ENCODE measurements at regions of chr5 and their contacts with region 1.

Region 1: GRCh38 chr5:15003511-15003920 is 131.9 kb upstream of the ANKH start:
- DNase-seq: peak; percentile 30
- H3K4me3 Mint-ChIP-seq: no peak overlapping the region
- H3K27ac Mint-ChIP-seq: no peak overlapping the region
- H3K4me1 Mint-ChIP-seq: peaks cover 18% of the 10 kb centered on the region
- H3K27me3 Mint-ChIP-seq: peaks cover 35% of the 10 kb centered on the region

Region 2: GRCh38 chr5:14351845-14352712 is 651.4 kb before region 1 on chr5:
- intact Hi-C with region 1: loop called (anchors 1 kb)
- DNase-seq: peak; percentile 33
- H3K4me3 Mint-ChIP-seq: no peak overlapping the region
- H3K27ac Mint-ChIP-seq: no peak overlapping the region
- H3K4me1 Mint-ChIP-seq: no peaks in the 10 kb centered on the region
- H3K27me3 Mint-ChIP-seq: peaks cover 6% of the 10 kb centered on the region

Region 3: GRCh38 chr5:14706615-14707021 is 296.9 kb before region 1 on chr5:
- intact Hi-C with region 1: loop called (anchors 5 kb)
- DNase-seq: peak; percentile 46
- H3K4me3 Mint-ChIP-seq: peak overlapping the region; percentile 79
- H3K27ac Mint-ChIP-seq: peak overlapping the region; percentile 99
- H3K4me1 Mint-ChIP-seq: peaks cover 76% of the 10 kb centered on the region
- H3K27me3 Mint-ChIP-seq: no peaks in the 10 kb centered on the region

Region 4: DNA sequence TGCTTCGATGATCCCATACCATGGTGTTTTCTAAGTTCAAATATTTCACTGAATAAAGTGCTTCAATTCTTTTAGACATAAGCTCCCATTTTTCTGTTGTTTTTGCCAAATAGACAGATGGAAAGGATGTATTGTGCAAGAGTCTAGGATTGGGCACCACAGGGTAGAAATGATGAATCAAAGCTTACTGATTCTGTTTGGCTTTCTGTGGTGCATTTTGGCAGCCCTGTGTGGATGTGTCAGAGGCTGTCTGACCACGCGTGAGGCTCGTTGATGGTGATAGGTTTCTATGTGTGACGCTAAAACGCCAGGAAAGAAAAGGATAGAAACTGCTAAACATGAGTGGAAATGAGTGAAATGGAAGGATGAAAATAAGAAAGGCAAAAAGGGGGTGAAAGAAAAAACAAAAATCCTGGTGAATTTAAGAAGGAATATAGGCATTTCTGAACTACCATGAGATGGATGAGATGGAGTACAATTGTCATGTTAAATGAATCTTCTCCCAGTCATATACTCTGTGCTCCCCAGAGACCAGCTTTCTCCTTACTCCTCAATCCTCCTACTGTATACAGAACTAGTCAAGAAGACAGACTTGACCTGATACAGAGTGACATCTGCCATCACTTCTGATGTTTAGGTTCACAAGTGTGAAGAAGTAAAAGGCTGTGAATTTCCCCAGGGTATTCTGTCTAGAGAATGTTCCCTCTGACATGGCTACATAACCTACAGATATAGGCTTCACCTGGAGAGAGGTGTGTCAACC is 186.3 kb before region 1 on chr5:
- intact Hi-C with region 1: loop called (anchors 5 kb)
- DNase-seq: no peak
- H3K4me3 Mint-ChIP-seq: no peak overlapping the region
- H3K27ac Mint-ChIP-seq: peak overlapping the region; percentile 43
- H3K4me1 Mint-ChIP-seq: peaks cover 43% of the 10 kb centered on the region
- H3K27me3 Mint-ChIP-seq: no peaks in the 10 kb centered on the region

Region 5: DNA sequence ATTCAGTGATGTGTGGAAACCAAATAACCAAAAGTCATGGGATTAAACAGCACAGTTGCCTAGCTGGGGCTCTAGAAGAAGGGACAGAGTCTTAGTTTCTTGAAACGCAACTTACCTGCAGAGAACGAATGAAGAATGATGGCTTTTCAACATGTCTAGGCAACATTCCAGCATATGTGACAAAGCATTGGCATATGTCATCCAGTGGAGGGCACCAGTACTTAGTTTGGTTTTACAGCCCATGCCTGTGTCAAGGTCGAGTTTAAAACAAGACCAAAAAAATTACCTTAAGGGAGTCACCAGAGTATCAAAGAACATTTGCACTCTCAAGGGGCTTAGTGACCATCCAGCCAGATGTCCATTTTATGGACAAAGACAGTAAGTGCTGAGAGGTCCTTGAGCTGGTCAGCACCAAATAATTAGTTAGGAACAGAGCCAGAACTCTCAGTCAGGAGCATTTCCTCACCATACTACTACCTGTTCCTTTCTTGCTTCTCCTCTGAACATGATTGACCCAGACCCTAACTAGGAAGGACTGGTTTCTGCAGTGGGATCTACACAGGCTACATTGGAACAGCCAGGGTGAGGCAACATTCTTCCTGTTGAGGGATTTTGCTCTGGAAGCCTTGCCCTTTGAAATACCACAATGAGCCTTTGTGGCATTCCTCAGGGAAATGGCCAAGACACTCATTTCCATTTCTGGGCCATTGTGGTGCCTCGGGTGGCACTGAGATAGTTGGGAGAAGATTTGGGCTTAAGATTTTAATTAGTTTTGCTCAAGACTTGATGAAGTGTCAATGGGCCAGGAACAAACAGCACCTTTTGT is 56.5 kb before region 1 on chr5:
- intact Hi-C with region 1: loop called (anchors 1 kb)
- DNase-seq: no peak
- H3K4me3 Mint-ChIP-seq: no peak overlapping the region
- H3K27ac Mint-ChIP-seq: no peak overlapping the region
- H3K4me1 Mint-ChIP-seq: peaks cover 6% of the 10 kb centered on the region
- H3K27me3 Mint-ChIP-seq: peaks cover 8% of the 10 kb centered on the region